ENCODE measurements at regions of chr9 and their contacts with region 1.

Region 1: GRCh38 chr9:127199001-127199791 is 65.4 kb upstream of the GARNL3 start:
- DNase-seq: peak; percentile 81
- H3K4me3 ChIP-seq: no peak overlapping the region
- H3K27ac ChIP-seq: peak overlapping the region; percentile 81
- H3K4me1 ChIP-seq: peaks cover 34% of the 10 kb centered on the region
- H3K27me3 ChIP-seq: no peaks in the 10 kb centered on the region
- CTCF ChIP-seq: peak; percentile 93

Region 2: DNA sequence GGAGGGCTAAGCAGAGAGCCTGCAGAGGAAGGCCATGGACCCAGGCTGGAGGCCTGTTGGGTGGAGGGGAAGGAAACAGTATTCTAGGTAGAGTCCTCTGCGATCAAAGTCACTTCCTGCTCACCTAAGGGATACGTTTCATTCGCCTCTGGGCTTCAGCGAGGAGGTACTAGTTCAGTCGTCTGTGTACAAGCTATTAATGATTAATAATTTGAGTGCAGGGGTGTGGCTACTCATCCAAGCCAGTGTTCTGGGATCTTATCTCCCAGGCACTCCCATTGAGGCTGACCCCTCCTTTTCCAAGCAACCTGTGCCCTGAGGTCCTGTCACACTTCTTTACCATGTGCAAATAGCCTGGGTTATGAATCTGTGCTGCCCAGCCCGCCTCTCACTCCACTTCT is 259.4 kb before region 1 on chr9:
- intact Hi-C with region 1: loop called (anchors 2 kb)
- DNase-seq: no peak
- H3K4me3 ChIP-seq: no peak overlapping the region
- H3K27ac ChIP-seq: no peak overlapping the region
- H3K4me1 ChIP-seq: peaks cover 65% of the 10 kb centered on the region
- H3K27me3 ChIP-seq: no peaks in the 10 kb centered on the region
- CTCF ChIP-seq: no peak

Measured in left ventricle myocardium inferior (tissue), 1 donor.